Heart left ventricle (tissue), 16 donors: ENCODE measurements at regions of chr1 and their contacts with region 1.

Region 1: GRCh38 chr1:234114648-234115307 is 210.3 kb downstream of the SLC35F3 start:
- DNase-seq: no peak
- ATAC-seq: no peak
- H3K4me3 ChIP-seq: peak overlapping the region in 1 of 12 donors; percentile 16
- H3K27ac ChIP-seq: no peak overlapping the region
- H3K4me1 ChIP-seq: peaks cover 0 to 4% (median 0%) of the 10 kb centered on the region in 12 donors
- H3K27me3 ChIP-seq: peaks cover 0 to 22% (median 0%) of the 10 kb centered on the region in 9 donors
- CTCF ChIP-seq: peak; percentile 48 to 77 (median 64)
- POLR2A ChIP-seq: no peak

Region 2: DNA sequence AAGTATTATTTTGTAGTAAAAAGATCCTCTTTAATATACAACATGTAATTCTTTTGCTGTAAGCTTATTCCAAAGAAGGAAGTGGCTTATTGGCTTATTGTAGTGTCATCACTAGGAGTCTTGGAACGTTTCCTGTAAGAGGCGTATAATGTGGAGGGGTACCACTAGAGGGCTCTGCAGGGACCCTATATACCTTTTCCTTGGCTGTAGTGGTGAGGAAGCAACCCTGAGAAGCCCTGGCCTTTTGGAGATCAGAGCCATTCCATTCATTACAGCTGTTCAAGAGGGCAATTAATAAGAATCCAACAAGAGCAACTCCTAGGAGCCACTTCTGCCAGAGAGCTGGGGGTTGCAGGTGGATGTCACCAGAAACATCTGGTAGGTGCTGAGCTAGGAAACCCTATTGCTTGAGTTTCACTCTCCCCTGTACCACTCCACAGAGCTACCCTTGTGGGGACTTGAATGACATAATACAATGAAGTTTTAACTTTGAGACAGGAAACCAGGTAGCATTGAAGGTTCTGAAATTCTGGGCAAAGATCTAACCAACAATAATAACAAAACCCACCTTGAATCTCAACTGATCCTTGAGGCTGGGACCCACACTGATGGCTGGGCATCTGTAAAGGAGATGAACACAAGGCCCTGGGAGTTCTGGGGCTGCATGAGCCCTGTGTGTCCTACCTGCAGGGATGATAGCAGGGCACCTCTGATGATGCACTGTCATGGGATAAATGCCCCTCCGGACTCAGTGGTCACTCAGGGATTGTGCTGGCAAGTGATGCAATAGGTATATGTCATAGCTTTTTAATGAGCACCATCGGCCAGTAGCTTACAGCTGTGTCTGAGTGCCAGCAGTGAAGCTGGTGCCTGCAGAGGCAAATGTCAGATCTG is 98.2 kb after region 1 on chr1:
- intact Hi-C with region 1: no loop called
- DNase-seq: no peak
- ATAC-seq: peak in 3 of 4 donors; percentile 60 to 61 (median 60)
- H3K4me3 ChIP-seq: no peak overlapping the region
- H3K27ac ChIP-seq: no peak overlapping the region
- H3K4me1 ChIP-seq: peaks cover 0 to 19% (median 3%) of the 10 kb centered on the region in 12 donors
- H3K27me3 ChIP-seq: peaks cover 16 to 66% (median 29%) of the 10 kb centered on the region in 9 donors
- CTCF ChIP-seq: peak in 9 of 12 donors; percentile 9 to 46 (median 28)
- POLR2A ChIP-seq: no peak

Region 3: GRCh38 chr1:234326497-234327366 is 212.0 kb after region 1 on chr1:
- intact Hi-C with region 1: loop called in 1 of 10 experiments (anchors 5 kb)
- DNase-seq: peak in 4 of 5 donors; percentile 23 to 36 (median 31)
- ATAC-seq: peak in 3 of 4 donors; percentile 58 to 83 (median 72)
- H3K4me3 ChIP-seq: peak overlapping the region in 9 of 12 donors; percentile 12 to 57 (median 38)
- H3K27ac ChIP-seq: peak overlapping the region in 1 of 12 donors; percentile 52
- H3K4me1 ChIP-seq: peaks cover 0 to 25% (median 0%) of the 10 kb centered on the region in 12 donors
- H3K27me3 ChIP-seq: peaks cover 0 to 39% (median 13%) of the 10 kb centered on the region in 9 donors
- CTCF ChIP-seq: peak; percentile 57 to 79 (median 73)
- POLR2A ChIP-seq: no peak